Activated naive CD8-positive, alpha-beta T cell treated with anti-CD3 and anti-CD28 coated beads, Interleukin-2, amount 10 ng/mL, durations not matched to agents 7 days and 5 days (primary cell): ENCODE measurements at regions of chr17 and their contacts with region 1.

Region 1: DNA sequence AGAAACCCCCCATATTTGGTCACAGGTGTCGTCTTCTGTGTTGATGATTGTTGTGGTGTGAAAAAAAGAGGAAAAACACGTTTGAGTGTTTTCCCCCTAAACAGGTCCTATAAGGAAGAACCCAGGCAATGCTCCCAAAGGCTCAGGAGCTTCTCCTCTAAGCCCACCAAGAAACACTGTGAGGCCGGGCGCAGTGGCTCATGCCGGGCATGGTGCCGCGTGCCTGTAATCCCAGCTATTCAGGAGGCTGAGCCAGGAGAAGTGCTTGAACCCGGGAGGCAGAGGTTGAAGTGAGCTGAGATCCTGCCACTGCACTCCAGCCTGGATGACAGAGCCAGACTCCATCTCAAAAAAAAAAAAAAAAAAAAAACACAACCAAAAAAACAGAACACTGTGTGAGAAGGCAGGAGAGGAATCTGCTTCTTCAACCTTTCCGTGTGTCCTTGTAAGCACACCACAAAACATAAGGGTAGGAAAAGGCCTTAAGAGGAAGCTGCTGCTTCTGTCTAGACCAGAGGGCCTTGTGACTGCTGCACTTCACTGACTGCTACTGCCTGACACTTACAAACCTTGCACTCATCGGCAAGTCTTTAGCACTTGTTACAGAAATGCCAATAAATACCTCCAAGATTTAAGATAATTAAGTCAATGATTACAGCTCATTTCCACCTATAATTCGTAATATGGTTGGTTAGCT is 9.3 kb downstream of the JPT1 start:
- DNase-seq: peak; percentile 5
- ATAC-seq: no peak
- H3K4me3 Mint-ChIP-seq: no peak overlapping the region
- H3K27ac Mint-ChIP-seq: no peak overlapping the region
- H3K4me1 Mint-ChIP-seq: peaks cover 26% of the 10 kb centered on the region
- H3K27me3 Mint-ChIP-seq: no peaks in the 10 kb centered on the region

Region 2: DNA sequence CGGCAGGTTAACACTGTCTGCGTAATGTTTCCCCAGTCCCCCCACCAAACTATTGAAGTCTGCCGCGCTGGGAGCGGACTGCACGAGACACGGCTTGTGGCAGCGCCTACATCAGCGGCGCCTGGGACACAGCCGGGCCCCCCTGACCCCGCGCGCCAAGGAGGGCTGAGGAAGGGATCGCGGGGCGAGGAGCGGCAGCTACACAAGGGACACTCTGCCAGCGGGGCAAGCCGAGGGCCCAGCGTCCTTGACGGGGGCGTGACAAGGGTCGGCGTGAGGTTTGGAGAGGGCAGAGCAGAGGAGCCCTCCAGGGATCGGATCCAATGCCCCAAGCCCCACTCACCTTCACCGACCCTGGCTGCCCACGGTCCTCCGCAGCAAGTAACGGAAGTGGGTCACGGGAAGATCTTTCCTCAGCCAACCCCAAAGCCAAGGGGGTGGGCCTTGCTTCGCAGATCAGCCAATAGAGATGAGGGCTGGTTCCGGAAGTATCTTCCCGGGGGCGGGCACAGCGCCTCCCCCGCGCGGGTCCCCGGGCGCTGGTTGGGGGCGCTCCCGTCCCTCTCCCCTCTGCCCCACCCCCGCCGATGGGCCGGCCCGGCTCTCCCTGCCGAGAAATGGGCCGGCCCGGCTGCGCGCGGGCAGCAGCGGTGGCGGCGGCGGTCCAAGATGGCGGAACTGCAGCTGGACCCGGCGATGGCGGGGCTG is 98.2 kb before region 1 on chr17 and contains the starts of genes ATP5PD and KCTD2:
- POLR2A ChIA-PET with region 1: no interaction called
- DNase-seq: peak; percentile 93
- ATAC-seq: peak; percentile 92
- H3K4me3 Mint-ChIP-seq: peak within 1 kb of the TSS; percentile 98
- H3K27ac Mint-ChIP-seq: peak within 1 kb of the TSS; percentile 93
- H3K4me1 Mint-ChIP-seq: peaks cover 23% of the 10 kb centered on the region
- H3K27me3 Mint-ChIP-seq: no peaks in the 10 kb centered on the region
- total RNA-seq, gene ATP5PD: 196 to 199 TPM
- total RNA-seq, gene KCTD2: 20.4 to 22.4 TPM

Region 3: DNA sequence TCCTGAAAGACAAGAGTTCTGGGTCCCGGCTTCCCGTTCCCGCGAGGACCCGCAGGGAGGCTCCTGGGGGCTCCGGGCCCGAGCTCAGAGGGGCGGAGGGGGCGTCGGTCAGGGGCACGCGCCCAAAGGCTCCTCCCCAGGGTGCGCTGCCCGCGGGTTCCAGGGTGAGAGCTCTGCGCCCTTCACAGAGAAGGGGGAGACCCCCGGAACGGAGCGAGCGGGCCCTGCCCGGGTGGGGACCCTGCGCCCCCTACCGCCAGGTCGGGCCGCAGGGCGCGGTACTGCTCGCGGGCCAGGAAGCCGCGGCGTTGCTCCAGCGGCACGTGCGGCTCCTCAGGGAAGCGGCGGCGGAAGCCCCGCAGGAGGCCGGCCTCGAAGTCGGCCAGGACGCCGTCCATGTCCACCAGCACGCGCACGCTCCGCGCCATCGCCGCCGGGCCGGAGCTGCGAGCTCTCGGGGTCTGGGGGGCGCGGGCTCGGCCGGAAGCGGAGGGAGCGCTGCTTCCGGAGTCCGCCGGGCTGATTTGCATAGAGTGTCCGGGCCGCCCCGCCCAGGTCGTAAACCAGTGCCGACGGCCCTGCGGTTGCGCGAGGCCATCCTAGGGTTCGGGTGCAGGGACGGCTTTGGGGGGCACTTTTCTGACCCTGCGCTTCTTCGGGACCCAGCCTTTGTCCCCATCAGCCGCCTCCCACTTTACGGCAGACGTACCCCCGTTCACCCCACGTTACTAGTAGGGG is 13.5 kb before region 1 on chr17 and contains the start of gene NT5C:
- POLR2A ChIA-PET with region 1: interaction called, 10 read pairs
- DNase-seq: peak; percentile 86
- ATAC-seq: peak; percentile 80
- H3K4me3 Mint-ChIP-seq: peak within 1 kb of the TSS; percentile 89
- H3K27ac Mint-ChIP-seq: peak within 1 kb of the TSS; percentile 85
- H3K4me1 Mint-ChIP-seq: peaks cover 10% of the 10 kb centered on the region
- H3K27me3 Mint-ChIP-seq: no peaks in the 10 kb centered on the region
- total RNA-seq, gene NT5C: 69.9 to 70.8 TPM

Region 4: GRCh38 chr17:75178453-75178852 is 33.5 kb after region 1 on chr17:
- POLR2A ChIA-PET with region 1: no interaction called
- DNase-seq: no peak
- ATAC-seq: no peak
- H3K4me3 Mint-ChIP-seq: no peak overlapping the region
- H3K27ac Mint-ChIP-seq: no peak overlapping the region
- H3K4me1 Mint-ChIP-seq: peaks cover 21% of the 10 kb centered on the region
- H3K27me3 Mint-ChIP-seq: no peaks in the 10 kb centered on the region

Region 5: GRCh38 chr17:75219815-75220214 is 74.9 kb after region 1 on chr17:
- POLR2A ChIA-PET with region 1: no interaction called
- DNase-seq: no peak
- ATAC-seq: no peak
- H3K4me3 Mint-ChIP-seq: no peak overlapping the region
- H3K27ac Mint-ChIP-seq: peak overlapping the region; percentile 38
- H3K4me1 Mint-ChIP-seq: peaks cover 4% of the 10 kb centered on the region
- H3K27me3 Mint-ChIP-seq: no peaks in the 10 kb centered on the region